Dorsolateral prefrontal cortex (tissue), 120 donors: ENCODE measurements at regions of chr9 and their contacts with region 1.

Region 1: GRCh38 chr9:75890472-75891276 is at the start of gene PCSK5:
- DNase-seq: peak; percentile 35 to 91 (median 88)
- H3K4me3 ChIP-seq: peak within 1 kb of the TSS; percentile 46 to 89 (median 82)
- H3K27ac ChIP-seq: peak within 1 kb of the TSS in 57 of 59 donors; percentile 1 to 93 (median 80)
- H3K27me3 ChIP-seq: peaks cover 0 to 8% (median 0%) of the 10 kb centered on the region in 45 donors
- CTCF ChIP-seq: peak in 41 of 56 donors; percentile 4 to 61 (median 34)
- total RNA-seq, gene PCSK5: 4.3 to 23.1 (median 10.0) TPM

Region 2: DNA sequence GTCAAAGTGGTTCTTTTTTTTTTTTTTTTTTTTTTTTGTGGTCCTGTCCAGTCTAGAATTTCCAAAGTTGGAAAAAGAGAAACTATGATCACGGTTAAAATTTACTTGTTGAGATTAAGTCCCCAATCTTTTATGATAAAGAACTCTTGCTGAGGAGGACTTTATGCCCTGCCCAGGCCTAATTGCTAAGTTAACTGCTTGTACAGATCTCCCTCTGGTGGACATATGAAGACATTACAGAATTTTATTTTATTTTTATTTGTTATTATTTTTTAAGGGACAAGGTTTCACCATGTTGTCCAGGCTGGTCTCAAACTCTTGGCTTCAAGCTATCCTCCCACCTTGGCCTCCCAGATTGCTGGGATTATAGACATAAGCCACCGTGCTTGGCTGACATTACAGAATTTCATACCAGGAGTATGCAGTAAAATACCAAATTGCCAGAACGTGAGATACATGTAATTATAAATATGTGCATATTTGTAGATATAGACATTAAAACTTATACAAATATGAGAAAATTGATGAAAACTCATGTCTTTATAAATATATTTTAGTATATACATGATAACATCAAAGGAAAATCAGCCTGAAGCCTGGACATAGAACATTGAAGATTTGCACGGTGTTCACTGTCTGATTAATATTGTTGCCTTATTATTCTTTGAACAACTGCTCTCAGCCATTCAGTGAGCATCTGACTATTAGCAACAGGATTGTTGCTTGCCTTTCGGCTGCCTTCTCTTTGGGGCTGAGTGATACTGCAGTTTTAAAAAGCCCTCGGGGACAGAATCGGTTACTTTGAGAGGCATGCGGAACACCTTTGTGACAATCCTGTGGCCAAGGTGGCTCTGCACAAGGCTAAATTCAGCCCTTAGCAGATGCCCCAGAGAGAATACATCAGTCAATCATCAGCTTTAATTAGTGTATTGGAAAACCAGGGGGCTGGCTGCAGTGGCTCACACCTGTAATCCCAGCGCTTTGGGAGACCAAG is 412.6 kb after region 1 on chr9:
- intact Hi-C with region 1: loop called in 1 of 2 experiments (anchors 10 kb)
- DNase-seq: peak in 1 of 10 donors; percentile 18
- H3K4me3 ChIP-seq: no peak overlapping the region
- H3K27ac ChIP-seq: no peak overlapping the region
- H3K27me3 ChIP-seq: peaks cover 0 to 8% (median 0%) of the 10 kb centered on the region in 45 donors
- CTCF ChIP-seq: peak; percentile 61 to 94 (median 76)

Region 3: DNA sequence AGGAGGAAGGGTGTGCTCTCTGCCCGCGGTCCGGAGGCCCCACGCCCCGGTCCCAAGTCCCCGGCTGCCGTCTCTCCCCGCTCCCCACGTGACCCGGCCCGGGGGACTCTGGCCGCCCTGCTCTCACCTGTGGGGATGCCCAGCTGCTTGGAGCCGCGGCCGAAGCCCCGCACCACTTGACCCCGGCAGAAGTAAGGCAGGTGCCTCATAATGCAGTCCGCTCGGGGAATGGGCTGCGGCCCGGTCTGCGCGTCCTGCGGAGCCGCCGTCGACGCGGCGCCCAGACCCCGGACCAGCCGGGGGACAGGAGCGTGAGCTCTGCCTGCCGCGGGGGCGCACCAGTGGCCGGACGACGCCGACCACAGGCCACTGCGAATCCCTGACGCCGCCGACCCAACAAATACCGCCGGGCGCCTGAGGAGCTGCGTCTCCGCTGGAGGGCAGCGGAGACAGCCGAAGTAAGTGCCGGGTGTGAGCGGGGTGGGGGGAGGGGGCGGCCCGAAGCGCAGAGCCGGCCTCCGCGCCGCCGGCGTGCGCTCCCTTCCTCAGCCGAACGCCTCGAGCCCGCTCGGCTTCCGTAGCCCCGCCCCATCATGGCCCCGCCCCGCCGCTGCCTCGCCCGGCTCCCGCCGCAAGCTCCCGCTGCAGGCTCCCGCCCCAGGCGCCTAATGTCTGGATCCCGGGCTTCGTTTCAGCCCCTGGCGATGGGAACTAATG is 503.4 kb after region 1 on chr9 and contains the start of gene RFK:
- intact Hi-C with region 1: loop called in 1 of 2 experiments (anchors 5 kb)
- DNase-seq: peak; percentile 79 to 94 (median 88)
- H3K4me3 ChIP-seq: peak within 1 kb of the TSS; percentile 68 to 99 (median 92)
- H3K27ac ChIP-seq: peak within 1 kb of the TSS; percentile 60 to 98 (median 95)
- H3K27me3 ChIP-seq: no peaks in the 10 kb centered on the region
- CTCF ChIP-seq: peak in 55 of 56 donors; percentile 6 to 87 (median 60)
- total RNA-seq, gene RFK: 15.3 to 57.0 (median 37.1) TPM